Activated T-helper 2 cell treated with anti-CD3 and anti-CD28 coated beads, Interferon-gamma antibody, Interleukin-2, Interleukin-4, amounts not matched to agents 10 μg/mL and 5 μg/mL and 100 μg/mL, durations not matched to agents 14 hours and 24 hours and 36 hours (primary cell): ENCODE measurements at regions of chr1 and their contacts with region 1.

Region 1: GRCh38 chr1:228139944-228140656 is at the start of gene GUK1:
- DNase-seq: peak; percentile 100
- H3K4me3 Mint-ChIP-seq: peak within 1 kb of the TSS; percentile 96
- H3K27ac Mint-ChIP-seq: peak within 1 kb of the TSS; percentile 96
- H3K4me1 Mint-ChIP-seq: peaks cover 17% of the 10 kb centered on the region
- H3K27me3 Mint-ChIP-seq: peaks cover 22% of the 10 kb centered on the region
- total RNA-seq, gene GUK1: 219 and 225 TPM in 2 replicates

Region 2: GRCh38 chr1:228082135-228082891 is 57.8 kb before region 1 on chr1 and contains the start of gene ARF1:
- intact Hi-C with region 1: loop called (anchors 1 kb)
- DNase-seq: peak; percentile 89
- H3K4me3 Mint-ChIP-seq: peak within 1 kb of the TSS; percentile 89
- H3K27ac Mint-ChIP-seq: peak within 1 kb of the TSS; percentile 92
- H3K4me1 Mint-ChIP-seq: peaks cover 42% of the 10 kb centered on the region
- H3K27me3 Mint-ChIP-seq: no peaks in the 10 kb centered on the region
- total RNA-seq, gene ARF1: 409 and 410 TPM in 2 replicates

Region 3: GRCh38 chr1:228102791-228103620 is 37.1 kb before region 1 on chr1 and contains the start of gene C1orf35:
- intact Hi-C with region 1: loop called (anchors 1 kb)
- DNase-seq: peak; percentile 95
- H3K4me3 Mint-ChIP-seq: peak within 1 kb of the TSS; percentile 91
- H3K27ac Mint-ChIP-seq: peak within 1 kb of the TSS; percentile 90
- H3K4me1 Mint-ChIP-seq: peaks cover 22% of the 10 kb centered on the region
- H3K27me3 Mint-ChIP-seq: no peaks in the 10 kb centered on the region
- total RNA-seq, gene C1orf35: 23.9 and 24.5 TPM in 2 replicates

Region 4: GRCh38 chr1:228109073-228109961 is 30.8 kb before region 1 on chr1 and contains the start of gene MRPL55:
- intact Hi-C with region 1: loop called (anchors 1 kb)
- DNase-seq: peak; percentile 98
- H3K4me3 Mint-ChIP-seq: peak within 1 kb of the TSS; percentile 82
- H3K27ac Mint-ChIP-seq: peak within 1 kb of the TSS; percentile 87
- H3K4me1 Mint-ChIP-seq: peaks cover 21% of the 10 kb centered on the region
- H3K27me3 Mint-ChIP-seq: no peaks in the 10 kb centered on the region
- total RNA-seq, gene MRPL55: 47.3 and 53.6 TPM in 2 replicates

Region 5: DNA sequence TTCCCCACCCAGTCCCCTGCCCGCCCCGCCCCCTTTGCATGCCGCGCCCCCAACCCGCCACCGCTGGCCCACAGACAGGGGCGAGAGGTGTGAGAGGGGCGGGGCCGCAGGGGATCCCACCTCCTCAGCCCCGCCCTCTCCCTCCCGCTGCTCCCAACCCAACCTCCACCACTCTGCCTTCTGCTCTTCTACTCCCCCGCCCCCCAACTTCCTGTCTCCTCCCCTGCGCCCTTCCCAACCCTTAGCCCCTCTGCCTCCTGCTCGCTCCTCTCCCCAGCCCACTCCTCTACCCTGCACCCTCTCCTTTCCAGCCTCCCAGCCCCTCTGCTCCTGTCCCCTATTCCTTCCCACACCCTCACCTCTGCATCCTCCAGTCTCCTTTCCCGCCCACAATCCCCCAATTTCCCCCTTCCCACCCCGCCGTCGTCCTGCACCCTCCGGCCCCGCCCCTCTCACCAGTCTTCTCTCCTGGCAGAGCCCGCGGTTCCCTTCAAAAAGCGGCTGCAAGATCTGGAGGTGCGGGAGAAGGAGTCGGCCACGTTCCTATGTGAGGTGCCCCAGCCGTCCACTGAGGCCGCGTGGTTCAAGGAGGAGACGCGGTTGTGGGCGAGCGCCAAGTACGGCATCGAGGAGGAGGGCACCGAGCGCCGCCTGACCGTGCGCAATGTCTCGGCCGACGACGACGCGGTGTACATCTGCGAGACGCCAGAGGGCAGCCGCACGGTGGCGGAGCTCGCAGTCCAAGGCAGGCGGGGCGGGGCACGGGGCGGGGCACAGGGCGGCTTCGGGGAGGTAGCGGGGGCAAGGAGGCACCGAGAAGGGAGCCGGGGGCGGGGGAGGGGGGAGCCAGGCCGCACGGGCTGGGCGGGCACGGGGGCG is 73.1 kb after region 1 on chr1:
- intact Hi-C with region 1: loop called (anchors 1 kb)
- DNase-seq: peak; percentile 82
- H3K4me3 Mint-ChIP-seq: peak overlapping the region; percentile 89
- H3K27ac Mint-ChIP-seq: peak overlapping the region; percentile 93
- H3K4me1 Mint-ChIP-seq: peaks cover 4% of the 10 kb centered on the region
- H3K27me3 Mint-ChIP-seq: no peaks in the 10 kb centered on the region

Region 6: GRCh38 chr1:228457396-228458176 is 317.5 kb after region 1 on chr1:
- intact Hi-C with region 1: loop called (anchors 1 kb)
- DNase-seq: peak; percentile 89
- H3K4me3 Mint-ChIP-seq: peak overlapping the region; percentile 98
- H3K27ac Mint-ChIP-seq: peak overlapping the region; percentile 99
- H3K4me1 Mint-ChIP-seq: peaks cover 42% of the 10 kb centered on the region
- H3K27me3 Mint-ChIP-seq: no peaks in the 10 kb centered on the region